PC-3 (cell line): ENCODE measurements at regions of chr11 and their contacts with region 1.

Region 1: DNA sequence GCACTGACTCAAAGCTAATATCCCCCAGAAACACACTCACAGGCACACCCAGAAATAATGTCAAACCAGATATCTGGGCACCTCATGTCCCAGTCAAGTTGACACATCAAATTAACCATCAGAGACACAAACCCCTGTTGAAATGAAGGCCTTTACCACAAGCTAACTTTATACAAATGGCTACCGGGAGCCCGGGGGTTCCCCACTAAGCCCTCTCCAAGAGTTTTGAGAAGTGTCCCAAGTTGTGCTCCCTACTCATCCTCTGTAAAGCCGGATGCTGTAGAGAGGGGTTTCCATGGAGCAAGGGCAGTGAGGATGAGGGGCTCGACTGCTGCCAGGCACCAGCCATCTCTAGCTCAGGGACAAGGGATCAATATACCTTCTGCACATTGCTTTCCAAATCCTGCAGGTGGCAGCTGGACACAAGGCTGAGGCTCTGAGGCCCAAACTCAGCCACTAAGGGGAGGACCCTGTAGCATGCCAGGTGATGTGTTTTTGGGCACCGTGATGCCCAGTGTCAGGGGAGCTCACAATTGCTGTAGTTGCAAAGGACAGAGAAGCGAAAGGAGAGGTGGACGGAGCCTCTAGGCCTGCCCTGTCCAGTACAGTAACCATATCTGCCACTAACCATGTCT is 145.7 kb downstream of the TTC17 start:
- DNase-seq: peak; percentile 53
- ATAC-seq: peak; percentile 89
- H3K4me3 ChIP-seq: no peak overlapping the region
- H3K27ac ChIP-seq: no peak overlapping the region
- H3K4me1 ChIP-seq: no peaks in the 10 kb centered on the region; the same call in 1 of the 2 replicates
- H3K27me3 ChIP-seq: 0 out of 2 replicates have a peak, but pooled peaks cover 3% of the 10 kb centered on the region
- CTCF ChIP-seq: peak; percentile 62

Region 2: DNA sequence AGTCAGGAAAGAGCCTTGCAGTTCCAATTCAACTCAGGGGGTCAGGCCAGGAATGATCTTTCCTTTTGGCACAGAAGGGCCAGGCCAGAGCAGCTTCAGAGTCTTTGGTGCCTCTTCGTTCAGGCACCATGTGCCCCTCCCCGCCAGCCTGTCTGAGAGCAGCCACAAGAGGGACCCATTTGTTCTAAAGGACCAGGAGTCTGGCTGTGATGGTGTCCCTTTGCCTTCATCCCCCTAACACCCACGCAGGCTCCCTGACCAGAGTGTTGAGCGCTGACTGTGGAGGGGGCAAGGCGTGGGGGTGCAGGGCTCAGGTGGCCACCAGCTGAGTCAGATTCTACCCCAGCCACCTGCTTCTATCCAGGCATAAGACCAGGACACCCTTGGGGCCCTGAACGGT is 10.7 kb after region 1 on chr11:
- CTCF ChIA-PET with region 1: no interaction called
- POLR2A ChIA-PET with region 1: no interaction called
- intact Hi-C with region 1: no loop called
- DNase-seq: no peak
- ATAC-seq: peak; percentile 38; the same call in 1 of the 2 replicates
- H3K4me3 ChIP-seq: no peak overlapping the region
- H3K27ac ChIP-seq: no peak overlapping the region
- H3K4me1 ChIP-seq: no peaks in the 10 kb centered on the region
- H3K27me3 ChIP-seq: peaks cover 44% of the 10 kb centered on the region
- CTCF ChIP-seq: peak; percentile 37; the same call in 1 of the 2 replicates

Region 3: DNA sequence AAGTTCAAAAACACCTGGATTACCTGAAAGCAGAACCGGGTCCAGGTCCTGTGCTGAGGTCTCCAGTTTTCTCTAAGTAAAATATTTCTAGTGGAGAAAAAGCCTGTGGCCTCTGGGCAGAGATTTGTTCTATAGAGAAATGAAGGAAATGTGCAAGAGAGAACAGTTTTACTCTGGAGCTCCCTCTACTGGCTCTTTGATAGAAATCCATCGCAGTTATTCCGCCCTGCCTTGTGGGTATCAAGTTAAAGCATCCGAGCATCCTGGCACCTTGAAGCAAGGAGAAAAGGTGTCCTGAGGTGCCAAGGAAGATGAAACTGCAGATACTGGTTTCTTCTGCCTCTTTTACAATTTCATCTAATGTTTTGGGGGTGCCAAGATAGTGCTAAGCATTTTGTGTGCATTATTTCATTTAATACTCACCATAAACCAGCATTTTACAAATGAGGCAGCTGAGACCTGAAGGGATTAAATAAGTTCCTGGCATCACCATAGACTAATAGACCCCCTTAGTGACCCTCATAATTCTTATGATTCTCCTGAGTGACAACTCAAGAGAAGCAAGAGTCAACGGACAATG is 63.1 kb after region 1 on chr11:
- CTCF ChIA-PET with region 1: interaction called, 4 read pairs
- POLR2A ChIA-PET with region 1: no interaction called
- intact Hi-C with region 1: loop called (anchors 2 kb)
- DNase-seq: peak; percentile 63
- ATAC-seq: peak; percentile 60
- H3K4me3 ChIP-seq: no peak overlapping the region
- H3K27ac ChIP-seq: no peak overlapping the region
- H3K4me1 ChIP-seq: no peaks in the 10 kb centered on the region
- H3K27me3 ChIP-seq: peaks cover 53% of the 10 kb centered on the region
- CTCF ChIP-seq: peak; percentile 72